Activated CD4-positive, alpha-beta T cell treated with anti-CD3 and anti-CD28 coated beads, Interleukin-2, amount 10 ng/mL, durations not matched to agents 24 days and 14 days (primary cell): ENCODE measurements at regions of chr6 and their contacts with region 1.

Region 1: GRCh38 chr6:138970856-138971425 is 17.1 kb downstream of the REPS1 start:
- DNase-seq: no peak
- H3K4me3 Mint-ChIP-seq: no peak overlapping the region
- H3K27ac Mint-ChIP-seq: no peak overlapping the region
- H3K4me1 Mint-ChIP-seq: peaks cover 37% of the 10 kb centered on the region
- H3K27me3 Mint-ChIP-seq: no peaks in the 10 kb centered on the region

Region 2: DNA sequence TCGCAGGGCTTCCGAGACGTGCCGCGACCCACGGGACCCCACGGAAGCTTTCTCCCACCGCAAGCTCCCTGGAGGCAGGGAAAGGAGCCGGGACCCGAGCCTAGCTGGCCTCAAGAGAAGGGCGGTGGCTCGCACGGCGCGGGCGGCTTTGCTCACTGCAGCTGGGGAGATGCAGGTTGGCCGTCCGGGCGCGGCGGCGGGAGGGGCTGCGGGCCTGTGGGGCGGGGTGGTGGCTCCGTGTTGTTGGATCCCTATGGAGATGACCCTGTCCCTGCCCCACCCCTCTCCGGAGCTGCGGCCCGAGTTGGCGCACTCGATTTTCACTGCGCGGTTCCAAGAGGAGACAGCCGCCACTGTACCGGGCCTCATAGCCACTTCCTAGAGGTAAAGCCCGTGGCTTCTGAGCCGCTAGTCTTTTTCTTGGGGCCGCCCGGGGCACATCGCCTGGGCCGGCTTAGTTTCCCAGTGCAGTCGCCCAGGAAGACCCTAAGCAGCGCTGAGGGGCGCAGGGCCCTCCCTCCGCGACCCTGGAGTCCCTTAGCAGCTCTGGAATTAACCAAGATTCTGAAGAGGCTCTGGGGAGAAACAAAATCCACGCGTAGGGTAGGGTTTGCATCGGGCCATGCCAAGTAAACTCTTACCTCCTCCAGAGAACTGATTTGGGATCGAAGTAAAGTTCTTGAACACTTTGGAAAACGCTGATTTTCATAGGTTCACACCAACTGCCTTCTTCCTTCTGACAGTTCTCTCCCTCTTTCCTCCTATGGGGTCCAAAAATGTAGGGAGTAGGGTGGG is 174.9 kb before region 1 on chr6 and contains the start of gene ECT2L:
- intact Hi-C with region 1: no loop called
- DNase-seq: no peak
- H3K4me3 Mint-ChIP-seq: no peak within 1 kb of the TSS
- H3K27ac Mint-ChIP-seq: no peak within 1 kb of the TSS
- H3K4me1 Mint-ChIP-seq: no peaks in the 10 kb centered on the region
- H3K27me3 Mint-ChIP-seq: peaks cover 12% of the 10 kb centered on the region
- total RNA-seq, gene ECT2L: not detected in 2 replicates

Region 3: DNA sequence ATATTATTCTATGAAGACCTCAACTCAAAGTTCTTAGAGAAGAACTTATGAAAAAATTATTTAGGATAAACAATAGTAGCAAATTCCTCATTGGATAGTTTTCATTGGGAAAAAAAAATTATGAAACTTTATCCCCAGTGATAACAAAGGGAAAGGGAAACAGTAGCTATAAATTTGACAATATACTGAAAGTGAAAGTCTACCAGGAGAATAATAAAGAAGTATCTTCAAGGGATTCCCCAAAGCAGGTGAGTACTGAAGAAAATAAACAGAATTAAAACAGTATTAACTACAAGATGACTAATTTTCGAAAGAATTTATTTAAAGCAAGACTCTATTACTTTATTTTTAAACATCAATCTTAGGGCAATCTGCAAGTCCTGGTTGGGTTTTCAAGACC is 39.3 kb before region 1 on chr6:
- intact Hi-C with region 1: no loop called
- DNase-seq: no peak
- H3K4me3 Mint-ChIP-seq: no peak overlapping the region
- H3K27ac Mint-ChIP-seq: no peak overlapping the region
- H3K4me1 Mint-ChIP-seq: peaks cover 8% of the 10 kb centered on the region
- H3K27me3 Mint-ChIP-seq: no peaks in the 10 kb centered on the region

Region 4: GRCh38 chr6:138944412-138944811 is 26.5 kb before region 1 on chr6:
- intact Hi-C with region 1: loop called (anchors 2 kb)
- DNase-seq: peak; percentile 69
- H3K4me3 Mint-ChIP-seq: no peak overlapping the region
- H3K27ac Mint-ChIP-seq: peak overlapping the region; percentile 45
- H3K4me1 Mint-ChIP-seq: peaks cover 40% of the 10 kb centered on the region
- H3K27me3 Mint-ChIP-seq: peaks cover 2% of the 10 kb centered on the region

Region 5: GRCh38 chr6:138981416-138981815 is 10.5 kb after region 1 on chr6:
- intact Hi-C with region 1: loop called (anchors 1 kb)
- DNase-seq: no peak
- H3K4me3 Mint-ChIP-seq: no peak overlapping the region
- H3K27ac Mint-ChIP-seq: no peak overlapping the region
- H3K4me1 Mint-ChIP-seq: peaks cover 23% of the 10 kb centered on the region
- H3K27me3 Mint-ChIP-seq: no peaks in the 10 kb centered on the region